Cardiac septum (tissue), 1 donor: ENCODE measurements at regions of chr17 and their contacts with region 1.

Region 1: GRCh38 chr17:63697341-63698286 is 2.3 kb downstream of the LIMD2 start:
- DNase-seq: peak; percentile 86

Region 2: GRCh38 chr17:63621766-63622519 is 75.7 kb before region 1 on chr17 and contains the start of gene MAP3K3:
- intact Hi-C with region 1: loop called (anchors 5 kb)
- DNase-seq: peak; percentile 100
- total RNA-seq, gene MAP3K3: 101 TPM

Region 3: GRCh38 chr17:63741221-63742049 is 43.8 kb after region 1 on chr17 and contains the start of gene STRADA:
- intact Hi-C with region 1: loop called (anchors 2 kb)
- DNase-seq: peak; percentile 100
- total RNA-seq, gene STRADA: 20.4 TPM